ENCODE measurements at regions of chrX and their contacts with region 1.

Region 1: GRCh38 chrX:40013266-40014195 is 84.2 kb downstream of the BCOR start:
- DNase-seq: peak; percentile 72 to 83
- H3K4me3 ChIP-seq: peak overlapping the region; percentile 69
- H3K4me3 Mint-ChIP-seq: peak overlapping the region; percentile 74
- H3K27ac Mint-ChIP-seq: peak overlapping the region; percentile 89
- H3K4me1 ChIP-seq: peaks cover 15% of the 10 kb centered on the region
- H3K4me1 Mint-ChIP-seq: peaks cover 8% of the 10 kb centered on the region
- H3K27me3 ChIP-seq: no peaks in the 10 kb centered on the region
- H3K27me3 Mint-ChIP-seq: no peaks in the 10 kb centered on the region
- CTCF ChIP-seq: no peak

Region 2: DNA sequence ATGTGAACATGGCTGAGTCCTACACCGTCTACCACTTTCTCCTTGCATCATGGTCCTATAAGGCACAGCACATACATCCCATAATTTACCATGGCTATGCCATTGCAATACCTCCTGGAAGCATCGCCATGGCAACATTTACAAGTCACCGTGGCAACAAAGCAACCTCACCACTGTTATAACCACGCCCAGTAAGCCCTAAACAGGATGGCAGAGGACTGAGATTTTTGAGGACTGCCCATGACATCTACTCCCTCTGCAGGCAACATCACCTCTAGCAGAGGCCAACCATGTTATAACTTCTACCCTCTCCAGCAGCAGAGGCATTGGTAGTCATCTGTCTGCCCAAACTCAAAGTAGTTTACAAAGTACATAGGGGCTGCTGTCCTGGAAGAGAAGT is 54.5 kb after region 1 on chrX:
- CTCF ChIA-PET with region 1: no interaction called
- POLR2A ChIA-PET with region 1: no interaction called
- intact Hi-C with region 1: no loop called
- DNase-seq: peak in 1 of 2 experiments; percentile 9
- H3K4me3 ChIP-seq: no peak overlapping the region
- H3K4me3 Mint-ChIP-seq: no peak overlapping the region
- H3K27ac Mint-ChIP-seq: no peak overlapping the region
- H3K4me1 ChIP-seq: no peaks in the 10 kb centered on the region
- H3K4me1 Mint-ChIP-seq: no peaks in the 10 kb centered on the region
- H3K27me3 ChIP-seq: no peaks in the 10 kb centered on the region
- H3K27me3 Mint-ChIP-seq: no peaks in the 10 kb centered on the region
- CTCF ChIP-seq: no peak

Region 3: GRCh38 chrX:40097497-40098263 is 84.1 kb after region 1 on chrX and contains the start of gene BCOR:
- CTCF ChIA-PET with region 1: interaction called, 4 read pairs
- POLR2A ChIA-PET with region 1: interaction called, 9 read pairs
- intact Hi-C with region 1: loop called (anchors 2 kb)
- DNase-seq: peak; percentile 63 to 65
- H3K4me3 ChIP-seq: peak within 1 kb of the TSS; percentile 55
- H3K4me3 Mint-ChIP-seq: peak within 1 kb of the TSS; percentile 83
- H3K27ac Mint-ChIP-seq: no peak within 1 kb of the TSS
- H3K4me1 ChIP-seq: 0 out of 2 replicates have a peak, but pooled peaks cover 7% of the 10 kb centered on the region
- H3K4me1 Mint-ChIP-seq: peaks cover 9% of the 10 kb centered on the region
- H3K27me3 ChIP-seq: no peaks in the 10 kb centered on the region
- H3K27me3 Mint-ChIP-seq: no peaks in the 10 kb centered on the region
- CTCF ChIP-seq: no peak
- total RNA-seq, gene BCOR: 16.2 and 18.6 TPM in 2 replicates

Region 4: DNA sequence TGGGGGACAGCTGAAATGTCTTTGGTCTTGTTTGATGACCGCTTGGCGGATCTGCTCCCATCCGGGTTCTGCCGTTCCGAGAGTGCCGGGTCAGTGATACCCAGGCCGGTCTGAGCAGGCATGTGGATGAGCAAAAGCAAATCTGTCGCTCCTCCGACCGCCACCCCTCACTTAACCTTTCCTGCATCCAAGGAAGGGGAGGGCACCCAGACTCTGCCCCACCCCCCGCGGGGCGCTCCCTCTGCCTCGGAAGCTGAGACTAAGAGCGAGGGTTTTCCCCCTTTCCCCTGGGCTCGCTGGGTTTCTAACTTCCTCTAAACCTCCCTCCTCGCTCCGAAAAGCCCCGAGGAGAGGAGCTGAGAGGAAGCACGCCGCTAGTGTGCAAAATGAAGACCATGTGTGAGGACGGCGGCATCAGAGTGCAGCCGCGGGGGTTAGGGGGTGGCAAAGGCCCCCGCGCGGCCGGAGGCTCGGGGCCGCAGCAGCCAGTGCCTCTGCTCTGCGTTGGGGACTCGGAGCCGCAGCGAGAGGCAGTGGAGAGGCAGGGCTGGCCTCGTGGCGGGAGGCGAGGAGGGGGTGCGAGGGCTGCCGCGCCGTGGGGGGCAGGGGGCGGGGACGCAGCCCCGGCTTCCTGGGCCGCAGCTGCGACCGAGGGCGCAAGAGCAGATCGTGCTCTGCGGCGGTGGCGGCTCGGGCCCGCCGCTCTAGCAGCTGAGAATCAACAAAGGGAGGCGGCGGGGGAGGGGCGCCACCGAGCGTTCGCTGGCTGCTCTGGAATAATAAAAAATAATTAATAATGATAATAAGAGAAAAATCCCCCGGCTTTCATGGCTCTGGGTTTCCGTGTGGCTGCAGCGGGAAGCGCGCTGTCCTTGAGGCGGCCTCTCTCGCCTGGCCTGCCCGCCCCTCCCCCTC is 140.1 kb after region 1 on chrX:
- CTCF ChIA-PET with region 1: no interaction called
- POLR2A ChIA-PET with region 1: no interaction called
- intact Hi-C with region 1: loop called (anchors 5 kb)
- DNase-seq: peak in 1 of 2 experiments; percentile 40
- H3K4me3 ChIP-seq: peak overlapping the region; percentile 41
- H3K4me3 Mint-ChIP-seq: peak overlapping the region; percentile 79
- H3K27ac Mint-ChIP-seq: no peak overlapping the region
- H3K4me1 ChIP-seq: 0 out of 2 replicates have a peak, but pooled peaks cover 6% of the 10 kb centered on the region
- H3K4me1 Mint-ChIP-seq: no peaks in the 10 kb centered on the region
- H3K27me3 ChIP-seq: no peaks in the 10 kb centered on the region
- H3K27me3 Mint-ChIP-seq: no peaks in the 10 kb centered on the region
- CTCF ChIP-seq: no peak

Region 5: GRCh38 chrX:40169193-40170101 is 155.9 kb after region 1 on chrX:
- CTCF ChIA-PET with region 1: interaction called, 4 read pairs
- POLR2A ChIA-PET with region 1: no interaction called
- intact Hi-C with region 1: loop called (anchors 5 kb)
- DNase-seq: peak; percentile 68
- H3K4me3 ChIP-seq: no peak overlapping the region
- H3K4me3 Mint-ChIP-seq: peak overlapping the region; percentile 37
- H3K27ac Mint-ChIP-seq: no peak overlapping the region
- H3K4me1 ChIP-seq: peaks cover 15% of the 10 kb centered on the region
- H3K4me1 Mint-ChIP-seq: no peaks in the 10 kb centered on the region
- H3K27me3 ChIP-seq: no peaks in the 10 kb centered on the region
- H3K27me3 Mint-ChIP-seq: no peaks in the 10 kb centered on the region
- CTCF ChIP-seq: peak; percentile 35 to 51

Region 6: DNA sequence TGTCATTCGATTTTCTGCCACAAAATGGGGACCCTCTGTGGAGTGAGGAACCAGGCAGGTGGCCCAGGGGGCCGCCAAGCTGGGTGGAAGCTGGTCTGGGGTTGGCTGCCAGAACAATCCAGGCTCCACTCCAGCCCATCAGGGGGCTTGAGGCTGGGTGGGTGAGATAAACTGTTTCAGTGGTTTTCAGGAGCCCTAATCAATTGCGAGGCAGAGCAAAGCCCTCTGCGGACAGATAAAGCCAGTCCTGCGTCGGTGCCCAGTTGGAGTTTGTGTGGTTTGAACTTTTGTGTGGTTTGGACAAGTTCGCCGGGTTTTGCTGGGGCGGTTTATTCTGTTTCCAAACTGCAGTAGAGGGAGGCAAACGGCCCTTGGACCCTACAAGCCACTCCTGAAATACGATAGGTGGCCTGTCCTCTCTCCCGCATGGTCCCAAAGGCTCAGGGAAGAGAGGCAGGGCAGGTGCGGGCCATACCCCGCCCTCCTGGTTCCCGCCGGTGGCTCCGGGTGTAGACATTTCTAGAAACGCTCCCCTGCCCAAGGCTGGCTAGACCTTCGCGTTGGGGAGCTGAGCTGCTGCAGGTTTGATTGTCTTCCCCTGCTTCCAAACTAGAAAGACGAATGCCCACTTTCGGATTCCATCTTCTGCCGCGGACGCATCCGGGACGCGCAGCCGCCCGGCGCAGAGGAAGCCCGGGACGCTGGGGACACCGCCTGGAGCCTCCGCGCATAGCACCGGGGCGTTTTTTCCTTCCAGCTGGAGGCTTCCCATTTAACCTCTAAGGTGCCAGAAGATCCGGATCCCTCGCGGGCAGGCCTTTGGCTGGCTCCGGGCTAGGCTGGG is 253.2 kb after region 1 on chrX:
- CTCF ChIA-PET with region 1: interaction called, 3 read pairs
- POLR2A ChIA-PET with region 1: no interaction called
- intact Hi-C with region 1: loop called (anchors 10 kb)
- DNase-seq: peak; percentile 64 to 76
- H3K4me3 ChIP-seq: peak overlapping the region; percentile 52
- H3K4me3 Mint-ChIP-seq: peak overlapping the region; percentile 63
- H3K27ac Mint-ChIP-seq: peak overlapping the region; percentile 34
- H3K4me1 ChIP-seq: peaks cover 16% of the 10 kb centered on the region; the same call in 1 of the 2 replicates
- H3K4me1 Mint-ChIP-seq: no peaks in the 10 kb centered on the region
- H3K27me3 ChIP-seq: no peaks in the 10 kb centered on the region
- H3K27me3 Mint-ChIP-seq: no peaks in the 10 kb centered on the region
- CTCF ChIP-seq: peak; percentile 49 to 67